T-cell (primary cell): ENCODE measurements at regions of chr2 and their contacts with region 1.

Region 1: GRCh38 chr2:174748948-174749347 is 15.3 kb downstream of the CHRNA1 start:
- DNase-seq: peak; percentile 31 to 85 (median 65)
- ATAC-seq: peak; percentile 54 to 82 (median 69)
- H3K4me3 ChIP-seq: no peak overlapping the region
- H3K4me3 Mint-ChIP-seq: no peak overlapping the region
- H3K27ac ChIP-seq: no peak overlapping the region
- H3K27ac Mint-ChIP-seq: no peak overlapping the region
- H3K4me1 ChIP-seq: peaks cover 4 to 35% of the 10 kb centered on the region in 2 experiments
- H3K4me1 Mint-ChIP-seq: peaks cover 39 to 42% (median 40%) of the 10 kb centered on the region in 3 donors
- H3K27me3 ChIP-seq: no peaks in the 10 kb centered on the region
- H3K27me3 Mint-ChIP-seq: peaks cover 0 to 5% of the 10 kb centered on the region in 2 donors

Region 2: GRCh38 chr2:174663550-174663949 is 85.4 kb before region 1 on chr2:
- CTCF ChIA-PET with region 1: no interaction called
- POLR2A ChIA-PET with region 1: no interaction called
- DNase-seq: no peak
- ATAC-seq: no peak
- H3K4me3 ChIP-seq: no peak overlapping the region
- H3K4me3 Mint-ChIP-seq: no peak overlapping the region
- H3K27ac ChIP-seq: no peak overlapping the region
- H3K27ac Mint-ChIP-seq: no peak overlapping the region
- H3K4me1 ChIP-seq: peaks cover 5 to 9% of the 10 kb centered on the region in 2 experiments
- H3K4me1 Mint-ChIP-seq: peaks cover 36 to 55% (median 46%) of the 10 kb centered on the region in 3 donors
- H3K27me3 ChIP-seq: no peaks in the 10 kb centered on the region
- H3K27me3 Mint-ChIP-seq: no peaks in the 10 kb centered on the region

Region 3: GRCh38 chr2:174697255-174697654 is 51.7 kb before region 1 on chr2:
- CTCF ChIA-PET with region 1: interaction called, 8 to 30 read pairs
- POLR2A ChIA-PET with region 1: interaction called in 1 of 2 experiments, 4 read pairs
- DNase-seq: peak in 34 of 35 experiments; percentile 26 to 79 (median 44)
- ATAC-seq: peak; percentile 85 to 94 (median 92)
- H3K4me3 ChIP-seq: no peak overlapping the region
- H3K4me3 Mint-ChIP-seq: no peak overlapping the region
- H3K27ac ChIP-seq: no peak overlapping the region
- H3K27ac Mint-ChIP-seq: no peak overlapping the region
- H3K4me1 ChIP-seq: no peaks in the 10 kb centered on the region
- H3K4me1 Mint-ChIP-seq: peaks cover 0 to 11% (median 4%) of the 10 kb centered on the region in 3 donors
- H3K27me3 ChIP-seq: peaks cover 2 to 18% of the 10 kb centered on the region in 2 experiments
- H3K27me3 Mint-ChIP-seq: peaks cover 0 to 5% of the 10 kb centered on the region in 2 donors

Region 4: GRCh38 chr2:174729797-174730697 is 18.9 kb before region 1 on chr2:
- CTCF ChIA-PET with region 1: interaction called, 3 to 10 read pairs
- POLR2A ChIA-PET with region 1: no interaction called
- DNase-seq: peak in 20 of 35 experiments; percentile 8 to 55 (median 25)
- ATAC-seq: peak; percentile 74 to 83 (median 82)
- H3K4me3 ChIP-seq: peak overlapping the region; percentile 59 to 75
- H3K4me3 Mint-ChIP-seq: peak overlapping the region; percentile 82 to 93 (median 86)
- H3K27ac ChIP-seq: no peak overlapping the region
- H3K27ac Mint-ChIP-seq: peak overlapping the region in 1 of 2 donors; percentile 23
- H3K4me1 ChIP-seq: peaks cover 0 to 21% of the 10 kb centered on the region in 2 experiments
- H3K4me1 Mint-ChIP-seq: peaks cover 16 to 30% (median 29%) of the 10 kb centered on the region in 3 donors
- H3K27me3 ChIP-seq: peaks cover 12 to 23% of the 10 kb centered on the region in 2 experiments
- H3K27me3 Mint-ChIP-seq: peaks cover 3 to 16% of the 10 kb centered on the region in 2 donors

Region 5: DNA sequence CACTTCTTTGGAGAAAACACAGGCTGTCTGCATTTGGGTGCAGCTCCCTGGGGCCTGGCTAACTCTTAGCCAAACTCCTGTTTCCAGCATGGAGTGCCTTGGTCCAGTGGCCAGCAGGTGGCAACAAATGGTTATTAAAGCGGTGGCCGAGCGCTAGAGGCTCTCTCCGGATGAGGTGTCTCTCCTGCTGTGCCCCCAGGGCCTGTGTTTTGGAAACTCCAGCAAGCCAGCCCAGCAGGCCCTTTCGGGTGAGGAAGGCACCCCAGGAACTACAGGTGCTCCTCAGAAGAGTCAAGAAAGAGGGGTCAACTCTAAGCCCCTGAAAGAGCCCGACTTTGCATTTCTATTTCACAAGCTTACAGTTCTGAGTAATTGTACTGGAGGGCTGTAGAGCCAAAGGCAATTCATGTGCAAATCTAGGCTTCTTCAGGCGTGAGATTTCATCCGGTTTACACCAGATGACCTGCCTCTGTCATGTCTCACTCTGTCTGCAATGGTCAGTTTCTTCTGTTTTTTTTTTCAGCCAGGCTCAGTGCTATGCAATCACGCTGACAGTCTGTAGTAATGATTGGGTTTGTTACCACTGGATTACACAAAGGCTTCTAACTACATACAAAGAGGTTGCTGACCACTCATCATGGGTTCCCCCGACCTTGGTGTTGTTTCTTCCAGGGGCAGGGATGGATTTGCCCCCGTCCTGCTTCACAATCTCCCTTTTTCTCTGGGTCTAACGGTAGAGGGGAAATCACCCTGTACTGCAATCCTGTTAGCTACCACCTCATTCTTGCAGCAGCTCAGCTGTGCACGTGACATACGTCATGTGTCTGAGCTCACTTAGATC is 22.9 kb after region 1 on chr2:
- CTCF ChIA-PET with region 1: interaction called, 12 to 18 read pairs
- POLR2A ChIA-PET with region 1: no interaction called
- DNase-seq: peak in 14 of 35 experiments; percentile 11 to 57 (median 31)
- ATAC-seq: peak in 2 of 4 experiments; percentile 63 to 72
- H3K4me3 ChIP-seq: no peak overlapping the region
- H3K4me3 Mint-ChIP-seq: no peak overlapping the region
- H3K27ac ChIP-seq: no peak overlapping the region
- H3K27ac Mint-ChIP-seq: no peak overlapping the region
- H3K4me1 ChIP-seq: peaks cover 4 to 15% of the 10 kb centered on the region in 2 experiments
- H3K4me1 Mint-ChIP-seq: peaks cover 17 to 20% (median 17%) of the 10 kb centered on the region in 3 donors
- H3K27me3 ChIP-seq: no peaks in the 10 kb centered on the region
- H3K27me3 Mint-ChIP-seq: no peaks in the 10 kb centered on the region

Region 6: DNA sequence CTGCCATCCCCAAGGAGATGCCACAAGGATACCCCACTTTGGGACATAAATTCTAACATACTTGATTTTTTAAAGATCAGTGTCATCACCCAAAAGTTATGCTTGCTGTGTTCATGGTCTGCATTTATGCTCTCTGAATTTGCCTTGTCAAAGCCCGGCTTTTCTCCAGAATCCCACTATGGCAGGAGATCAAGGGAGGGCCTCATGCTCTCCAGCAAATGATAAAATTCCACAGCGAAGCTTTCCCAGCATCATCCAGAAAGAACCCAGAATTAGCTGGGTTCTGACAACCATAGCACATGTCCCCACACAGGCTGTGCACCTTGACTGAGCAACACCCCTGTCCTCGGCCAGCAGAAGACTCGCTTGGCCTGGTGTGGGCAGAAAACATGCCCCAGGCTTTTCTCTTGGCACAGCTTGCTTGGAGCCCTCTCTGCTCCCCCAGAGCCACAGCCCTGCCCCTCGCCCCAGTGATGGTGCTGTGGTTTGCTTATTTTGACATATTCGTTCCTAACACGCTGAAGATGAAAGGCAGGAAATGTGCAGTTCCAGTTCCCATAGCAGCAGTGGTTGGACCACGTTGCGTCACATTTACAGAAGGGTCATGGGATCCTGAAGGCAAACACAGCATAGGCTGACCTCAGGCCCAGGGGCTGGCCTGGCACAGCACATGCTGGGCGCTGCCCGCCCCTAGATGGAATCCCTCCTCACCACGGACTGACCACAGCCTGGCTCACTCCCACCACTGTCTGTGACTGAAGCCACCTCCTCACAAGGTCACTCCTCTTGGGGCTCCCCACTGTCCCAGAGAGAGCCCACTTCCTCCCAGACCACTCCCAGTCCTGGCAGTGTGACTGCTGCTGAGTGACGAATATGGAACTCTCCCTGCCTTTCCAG is 29.4 kb after region 1 on chr2:
- CTCF ChIA-PET with region 1: interaction called, 12 to 18 read pairs
- POLR2A ChIA-PET with region 1: no interaction called
- DNase-seq: peak; percentile 55 to 94 (median 82)
- ATAC-seq: peak; percentile 89 to 93 (median 91)
- H3K4me3 ChIP-seq: peak overlapping the region in 1 of 2 donors; percentile 3
- H3K4me3 Mint-ChIP-seq: peak overlapping the region; percentile 44 to 69 (median 54)
- H3K27ac ChIP-seq: peak overlapping the region; percentile 57
- H3K27ac Mint-ChIP-seq: peak overlapping the region; percentile 67 to 93
- H3K4me1 ChIP-seq: peaks cover 32 to 50% of the 10 kb centered on the region in 2 experiments
- H3K4me1 Mint-ChIP-seq: peaks cover 52 to 59% (median 59%) of the 10 kb centered on the region in 3 donors
- H3K27me3 ChIP-seq: no peaks in the 10 kb centered on the region
- H3K27me3 Mint-ChIP-seq: no peaks in the 10 kb centered on the region

Region 7: GRCh38 chr2:174985630-174986029 is 236.7 kb after region 1 on chr2:
- CTCF ChIA-PET with region 1: interaction called, 10 to 26 read pairs
- POLR2A ChIA-PET with region 1: no interaction called
- DNase-seq: no peak
- ATAC-seq: no peak
- H3K4me3 ChIP-seq: no peak overlapping the region
- H3K4me3 Mint-ChIP-seq: no peak overlapping the region
- H3K27ac ChIP-seq: no peak overlapping the region
- H3K27ac Mint-ChIP-seq: no peak overlapping the region
- H3K4me1 ChIP-seq: peaks cover 0 to 3% of the 10 kb centered on the region in 2 experiments
- H3K4me1 Mint-ChIP-seq: peaks cover 3 to 10% (median 7%) of the 10 kb centered on the region in 3 donors
- H3K27me3 ChIP-seq: no peaks in the 10 kb centered on the region
- H3K27me3 Mint-ChIP-seq: peaks cover 1 to 3% of the 10 kb centered on the region in 2 donors